Activated T-helper 1 cell treated with anti-CD3 and anti-CD28 coated beads, Interleukin-12 subunit alpha, Interleukin-12 subunit beta, Interleukin-2, Interleukin-4 antibody, amounts not matched to agents 30 ng/mL and 10 ng/mL and 1 ng/mL, durations not matched to agents 14 hours and 24 hours and 36 hours (primary cell): ENCODE measurements at regions of chr1 and their contacts with region 1.

Region 1: GRCh38 chr1:244730153-244730933 is 77.4 kb downstream of the DESI2 start:
- DNase-seq: no peak
- H3K4me3 Mint-ChIP-seq: peak overlapping the region; percentile 85
- H3K27ac Mint-ChIP-seq: peak overlapping the region; percentile 48
- H3K4me1 Mint-ChIP-seq: peaks cover 12% of the 10 kb centered on the region
- H3K27me3 Mint-ChIP-seq: peaks cover 32% of the 10 kb centered on the region

Region 2: DNA sequence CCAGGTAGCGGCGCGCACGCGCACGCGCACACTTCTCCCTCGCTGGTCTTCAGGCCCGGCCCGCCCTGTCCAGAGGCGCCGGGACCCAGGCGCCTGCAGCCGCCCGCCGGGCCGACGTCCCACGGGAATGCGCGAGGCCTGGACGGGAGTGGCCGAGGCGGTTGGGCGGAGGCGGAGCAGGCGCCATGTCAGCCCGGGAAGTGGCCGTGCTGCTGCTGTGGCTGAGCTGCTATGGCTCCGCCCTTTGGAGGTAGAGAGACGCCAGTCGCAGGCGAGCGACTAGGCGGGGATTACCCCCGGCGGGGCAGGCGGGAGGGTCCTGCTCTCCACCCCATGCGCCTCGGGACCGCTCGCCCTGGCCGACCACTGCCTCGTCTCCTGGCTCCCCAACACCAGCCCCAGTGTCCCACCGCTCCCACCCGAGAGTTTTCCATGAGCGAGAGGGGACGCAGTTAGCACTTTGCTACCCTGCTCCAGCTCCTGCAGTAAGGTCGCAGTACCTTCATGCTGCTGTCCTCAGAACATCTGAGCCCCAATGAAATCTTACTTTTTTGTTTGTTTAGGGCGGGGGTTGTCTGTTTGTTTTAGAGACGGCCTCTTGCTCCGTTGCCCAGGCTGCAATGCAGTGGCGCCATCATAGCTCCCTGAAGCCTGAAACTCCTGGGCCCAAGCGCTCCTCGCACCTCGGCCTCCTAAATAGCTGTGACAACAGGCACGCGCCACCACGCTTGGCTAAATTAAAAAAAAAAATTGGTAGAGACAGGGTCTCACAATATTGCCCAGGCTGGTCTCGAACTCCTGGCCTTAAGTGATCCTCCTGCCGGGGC is 268.9 kb before region 1 on chr1 and contains the start of gene CATSPERE:
- intact Hi-C with region 1: loop called (anchors 1 kb)
- DNase-seq: peak; percentile 74
- H3K4me3 Mint-ChIP-seq: peak within 1 kb of the TSS; percentile 85
- H3K27ac Mint-ChIP-seq: peak within 1 kb of the TSS; percentile 87
- H3K4me1 Mint-ChIP-seq: peaks cover 21% of the 10 kb centered on the region
- H3K27me3 Mint-ChIP-seq: no peaks in the 10 kb centered on the region
- total RNA-seq, gene CATSPERE: 0.08 and 0.17 TPM in 2 replicates

Region 3: GRCh38 chr1:244712669-244713068 is 17.7 kb before region 1 on chr1:
- intact Hi-C with region 1: loop called (anchors 2 kb)
- DNase-seq: no peak
- H3K4me3 Mint-ChIP-seq: no peak overlapping the region
- H3K27ac Mint-ChIP-seq: peak overlapping the region; percentile 36
- H3K4me1 Mint-ChIP-seq: peaks cover 8% of the 10 kb centered on the region
- H3K27me3 Mint-ChIP-seq: peaks cover 4% of the 10 kb centered on the region